ENCODE measurements at regions of chr7 and their contacts with region 1.

Region 1: DNA sequence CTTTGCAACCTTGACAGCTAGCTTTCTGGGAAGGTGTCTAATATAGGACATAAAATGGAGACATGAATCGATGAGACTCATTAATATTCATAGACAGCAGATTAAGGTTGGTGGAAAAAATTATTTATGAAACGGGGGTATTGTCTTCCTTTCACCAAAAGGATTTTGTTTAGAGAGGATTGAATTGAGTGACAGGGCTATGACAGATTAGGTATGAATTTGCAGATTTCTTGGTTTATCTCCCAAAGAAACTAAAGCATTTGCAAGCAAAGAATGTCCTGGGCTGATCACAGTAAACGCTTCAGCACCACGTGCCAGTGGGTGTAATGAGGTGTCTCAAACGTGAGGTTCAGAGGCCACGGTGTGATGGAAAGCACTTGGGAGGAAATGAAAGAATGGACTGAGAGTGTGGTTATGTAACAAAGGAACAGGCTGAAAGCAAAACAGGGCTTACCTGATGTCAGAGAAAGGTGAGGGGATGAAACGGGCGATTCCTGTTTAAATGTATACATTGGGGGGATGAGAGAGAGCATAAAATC is 329.2 kb upstream of the NPVF start:
- DNase-seq: no peak
- ATAC-seq: peak in 1 of 4 donors; percentile 29
- H3K4me3 ChIP-seq: no peak overlapping the region
- H3K27ac ChIP-seq: no peak overlapping the region
- H3K4me1 ChIP-seq: no peaks in the 10 kb centered on the region
- H3K27me3 ChIP-seq: no peaks in the 10 kb centered on the region
- CTCF ChIP-seq: no peak

Region 2: DNA sequence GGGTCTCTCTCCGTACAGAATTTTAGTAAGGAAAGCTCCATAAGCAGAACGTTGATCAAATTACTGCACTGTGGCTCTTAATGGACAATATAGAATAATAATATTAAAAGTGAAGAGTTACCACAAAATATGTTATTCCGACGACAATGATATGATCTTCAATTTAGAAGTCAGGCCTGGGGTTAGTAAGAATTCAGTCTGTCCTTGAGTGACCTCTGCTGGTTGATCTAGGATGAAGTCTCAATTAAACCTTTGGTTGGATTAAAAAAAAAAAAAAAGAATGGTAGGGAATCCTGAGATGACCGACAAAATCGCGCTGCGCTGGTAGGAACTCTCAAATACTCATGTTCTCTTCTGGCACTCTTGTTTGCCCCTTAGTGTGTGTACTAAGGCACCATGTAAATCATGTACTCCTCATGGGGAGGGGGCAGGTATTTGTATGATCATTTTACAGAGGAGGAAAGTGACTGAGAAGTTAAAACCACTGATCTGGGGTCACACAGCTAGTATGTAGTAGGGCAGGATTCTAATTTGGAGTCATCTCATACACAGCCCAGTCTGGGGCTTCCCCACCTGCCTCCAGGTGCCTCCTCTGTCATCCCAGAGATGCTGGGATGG is 167.8 kb before region 1 on chr7:
- intact Hi-C with region 1: loop called in 2 of 3 experiments (anchors 5 kb)
- DNase-seq: peak in 3 of 6 donors; percentile 20 to 36 (median 31)
- ATAC-seq: peak; percentile 31 to 68 (median 55)
- H3K4me3 ChIP-seq: no peak overlapping the region
- H3K27ac ChIP-seq: no peak overlapping the region
- H3K4me1 ChIP-seq: peaks cover 18 to 36% (median 34%) of the 10 kb centered on the region in 3 donors
- H3K27me3 ChIP-seq: no peaks in the 10 kb centered on the region
- CTCF ChIP-seq: peak in 3 of 4 donors; percentile 29 to 59 (median 42)

Measured in pancreas (tissue), 10 donors.